GM12878 (cell line): ENCODE measurements at regions of chr9 and their contacts with region 1.

Region 1: DNA sequence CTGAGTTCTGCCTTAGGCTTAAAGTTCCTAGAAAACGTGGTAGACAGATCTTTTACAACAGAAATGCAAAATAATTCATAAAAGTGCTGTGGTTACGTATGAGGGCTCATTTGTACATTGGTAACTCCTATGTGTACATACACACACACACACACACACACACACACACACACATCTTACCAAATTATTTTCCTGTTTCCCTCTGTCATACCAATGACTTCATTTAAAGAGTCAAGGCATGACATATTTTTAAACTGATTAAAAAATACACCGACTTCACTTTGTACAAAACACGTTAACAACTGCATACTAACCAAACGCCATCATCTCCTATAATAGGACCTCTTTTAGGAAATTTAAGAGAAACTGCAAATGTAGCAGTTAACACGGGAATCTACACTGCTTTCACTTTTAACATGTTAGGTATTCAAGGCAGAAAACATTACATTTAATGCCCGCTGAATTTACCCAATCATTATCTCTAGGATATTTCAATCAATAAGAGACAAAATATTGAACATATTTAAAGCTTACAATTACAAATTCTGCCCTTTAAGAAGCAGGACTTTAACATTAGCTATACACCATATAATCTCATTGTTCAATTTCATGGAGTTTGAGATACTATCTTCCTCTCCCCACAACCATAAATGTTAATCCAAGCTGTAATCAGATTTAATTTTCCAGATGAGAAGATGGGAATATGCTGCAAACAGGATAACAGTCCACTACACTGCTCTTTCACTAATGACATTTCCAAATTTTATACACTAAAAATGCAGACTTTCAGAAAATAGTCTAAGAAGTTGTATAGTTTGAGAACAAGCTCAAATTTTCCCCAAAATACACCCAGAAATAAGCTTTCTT is 133.1 kb downstream of the DENND1A start:
- DNase-seq: no peak
- ATAC-seq: peak; percentile 47
- H3K4me3 ChIP-seq: peak overlapping the region; percentile 40
- H3K27ac ChIP-seq: peak overlapping the region; percentile 51
- H3K4me1 ChIP-seq: peaks cover 6% of the 10 kb centered on the region
- H3K27me3 ChIP-seq: no peaks in the 10 kb centered on the region
- CTCF ChIP-seq: no peak
- EP300 ChIP-seq: no peak
- POLR2A ChIP-seq: no peak
- RAD21 ChIP-seq: no peak

Region 2: DNA sequence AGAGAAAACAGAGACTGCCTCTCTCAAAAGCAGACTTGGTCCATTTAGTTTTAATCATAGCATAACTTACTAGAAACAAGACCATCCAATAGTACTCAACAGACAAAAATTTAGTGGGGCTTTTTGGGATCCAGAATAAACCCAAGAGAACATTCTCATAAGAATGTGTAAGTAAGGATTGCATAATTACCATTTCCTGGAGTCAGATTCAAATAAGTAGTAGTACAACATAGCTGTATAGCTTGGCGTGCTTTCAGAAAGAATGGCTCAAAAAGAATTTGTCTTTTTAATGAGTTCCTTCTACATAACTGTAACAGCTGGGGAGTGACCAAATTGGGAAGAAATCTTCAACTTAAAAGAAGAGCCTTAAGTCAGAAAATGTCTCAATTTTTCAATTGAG is 12.3 kb before region 1 on chr9:
- CTCF ChIA-PET with region 1: interaction called, 3 read pairs
- POLR2A ChIA-PET with region 1: no interaction called
- RAD21 ChIA-PET with region 1: interaction called, 3 read pairs
- SMC1A ChIA-PET with region 1: interaction called, 17 read pairs
- in situ Hi-C with region 1: no loop called
- intact Hi-C with region 1: no loop called
- DNase-seq: no peak
- ATAC-seq: no peak
- H3K4me3 ChIP-seq: no peak overlapping the region
- H3K27ac ChIP-seq: no peak overlapping the region
- H3K4me1 ChIP-seq: no peaks in the 10 kb centered on the region
- H3K27me3 ChIP-seq: no peaks in the 10 kb centered on the region
- CTCF ChIP-seq: no peak
- EP300 ChIP-seq: no peak
- POLR2A ChIP-seq: no peak
- RAD21 ChIP-seq: no peak

Region 3: DNA sequence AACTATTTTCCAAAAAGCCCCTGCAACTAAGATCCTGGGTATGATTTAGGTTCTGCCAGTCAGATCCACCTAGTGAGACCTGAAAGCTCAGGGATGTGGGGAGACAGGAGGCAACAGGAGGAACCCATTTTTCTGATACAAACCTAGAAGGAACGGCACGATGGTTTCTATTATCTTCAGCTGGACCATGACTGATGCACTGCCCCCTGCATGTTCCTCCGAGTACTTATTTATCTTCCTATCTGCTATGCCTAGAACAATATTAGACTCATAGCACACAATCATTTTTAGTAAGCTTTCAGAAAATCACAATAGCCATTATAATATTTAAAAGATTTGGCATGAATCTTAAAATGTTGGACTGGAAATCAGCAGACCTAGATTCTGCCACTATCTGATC is 12.1 kb after region 1 on chr9:
- CTCF ChIA-PET with region 1: no interaction called
- POLR2A ChIA-PET with region 1: no interaction called
- RAD21 ChIA-PET with region 1: interaction called, 3 read pairs
- SMC1A ChIA-PET with region 1: interaction called, 17 read pairs
- in situ Hi-C with region 1: no loop called
- intact Hi-C with region 1: no loop called
- DNase-seq: no peak
- ATAC-seq: no peak; the same call in 2 of the 3 replicates
- H3K4me3 ChIP-seq: no peak overlapping the region
- H3K27ac ChIP-seq: no peak overlapping the region
- H3K4me1 ChIP-seq: peaks cover 3% of the 10 kb centered on the region; the same call in 1 of the 2 replicates
- H3K27me3 ChIP-seq: no peaks in the 10 kb centered on the region
- CTCF ChIP-seq: no peak
- EP300 ChIP-seq: no peak
- POLR2A ChIP-seq: no peak
- RAD21 ChIP-seq: no peak

Region 4: DNA sequence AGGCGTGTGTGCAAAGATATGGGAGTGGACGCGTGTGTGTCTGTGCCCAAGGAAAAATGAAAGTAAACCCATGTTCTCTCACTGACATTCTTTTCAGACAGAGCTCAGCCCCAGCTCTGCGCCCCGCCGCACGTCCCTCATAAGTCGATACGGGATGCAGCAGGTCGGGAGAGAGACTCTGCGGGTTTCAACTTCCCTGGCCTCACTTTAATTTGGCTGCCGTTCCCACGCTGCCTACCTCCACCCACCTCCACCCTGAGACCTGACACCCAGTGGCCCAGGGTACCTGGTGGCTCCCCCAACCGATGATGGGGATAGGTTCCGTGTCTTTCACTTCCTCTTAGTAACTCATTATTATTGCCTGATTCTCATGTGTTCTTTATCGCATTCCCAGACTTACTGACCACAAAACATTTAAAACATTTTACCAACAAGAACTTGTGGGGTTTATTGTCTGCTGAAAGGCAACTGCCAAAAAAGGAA is 234.2 kb after region 1 on chr9:
- CTCF ChIA-PET with region 1: no interaction called
- POLR2A ChIA-PET with region 1: no interaction called
- RAD21 ChIA-PET with region 1: no interaction called
- SMC1A ChIA-PET with region 1: no interaction called
- in situ Hi-C with region 1: no loop called
- intact Hi-C with region 1: no loop called
- DNase-seq: peak; percentile 76
- ATAC-seq: peak; percentile 86
- H3K4me3 ChIP-seq: no peak overlapping the region
- H3K27ac ChIP-seq: no peak overlapping the region
- H3K4me1 ChIP-seq: peaks cover 4% of the 10 kb centered on the region; the same call in 1 of the 2 replicates
- H3K27me3 ChIP-seq: peaks cover 0 to 4% of the 10 kb centered on the region in 2 experiments; a peak in 3 of 4 replicates
- CTCF ChIP-seq: no peak
- EP300 ChIP-seq: 0 out of 4 replicates have a peak, but pooled peaks of 1 of the 2 experiments have one; percentile 9
- POLR2A ChIP-seq: no peak
- RAD21 ChIP-seq: no peak